HCT116 (cell line): ENCODE measurements at regions of chr6 and their contacts with region 1.

Region 1: DNA sequence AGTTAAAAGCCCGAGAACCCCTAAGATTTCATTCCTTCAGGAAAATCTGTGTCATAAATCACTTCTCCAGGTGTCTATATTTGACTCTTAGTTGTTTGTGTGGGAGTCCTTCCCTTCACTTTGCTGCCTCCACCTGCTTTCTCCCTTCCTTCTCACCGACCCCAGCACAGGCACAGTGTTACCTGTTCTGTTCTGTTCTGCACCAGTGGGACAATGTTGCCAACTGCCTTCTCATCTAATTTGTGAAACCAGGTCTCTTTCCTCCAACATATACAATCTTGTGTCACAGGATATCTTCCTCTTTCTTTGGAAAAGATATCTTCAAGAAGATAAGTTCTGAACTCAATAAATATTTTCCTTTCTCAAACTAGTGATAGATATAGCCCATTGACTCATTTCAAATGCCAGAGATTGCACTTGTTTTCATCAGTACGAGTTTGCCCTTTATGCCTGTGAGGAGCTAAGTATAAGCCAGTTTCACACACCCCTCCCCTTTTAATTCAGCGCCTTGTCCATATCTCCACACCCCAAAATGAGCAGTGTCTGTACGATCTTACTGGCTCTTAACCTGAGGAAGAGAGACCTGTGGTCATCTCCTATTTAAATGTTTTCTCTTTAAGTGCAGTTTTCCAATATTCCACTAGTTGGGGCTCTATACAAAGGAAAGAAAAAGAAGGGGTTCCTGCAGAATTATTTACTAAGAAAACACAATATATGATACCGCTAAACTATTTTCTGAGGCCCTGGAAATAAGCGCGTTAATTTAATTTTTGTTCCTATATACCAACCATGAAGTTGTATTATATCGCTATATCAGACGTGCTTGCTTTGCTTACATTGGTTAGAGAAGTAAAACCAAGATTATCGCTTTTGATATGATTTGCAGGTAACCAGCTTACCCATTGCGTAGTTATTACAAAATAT is 81.6 kb upstream of the PREP start:
- DNase-seq: peak; percentile 42
- ATAC-seq: peak; percentile 78
- H3K4me3 ChIP-seq: no peak overlapping the region
- H3K27ac ChIP-seq: no peak overlapping the region
- H3K4me1 ChIP-seq: no peaks in the 10 kb centered on the region
- H3K27me3 ChIP-seq: no peaks in the 10 kb centered on the region
- CTCF ChIP-seq: peak; percentile 70 to 93 (median 78)
- POLR2A ChIP-seq: no peak
- RAD21 ChIP-seq: peak; percentile 88

Region 2: GRCh38 chr6:105952772-105953690 is 468.5 kb after region 1 on chr6:
- CTCF ChIA-PET with region 1: no interaction called
- POLR2A ChIA-PET with region 1: no interaction called
- RAD21 ChIA-PET with region 1: no interaction called
- intact Hi-C with region 1: no loop called
- DNase-seq: no peak
- ATAC-seq: no peak
- H3K4me3 ChIP-seq: no peak overlapping the region
- H3K27ac ChIP-seq: no peak overlapping the region
- H3K4me1 ChIP-seq: no peaks in the 10 kb centered on the region
- H3K27me3 ChIP-seq: no peaks in the 10 kb centered on the region
- CTCF ChIP-seq: no peak
- POLR2A ChIP-seq: no peak
- RAD21 ChIP-seq: no peak

Region 3: GRCh38 chr6:106223300-106223930 is 738.9 kb after region 1 on chr6:
- CTCF ChIA-PET with region 1: interaction called, 4 read pairs
- POLR2A ChIA-PET with region 1: no interaction called
- RAD21 ChIA-PET with region 1: no interaction called
- intact Hi-C with region 1: loop called (anchors 2 kb)
- DNase-seq: peak; percentile 72
- ATAC-seq: peak; percentile 85
- H3K4me3 ChIP-seq: no peak overlapping the region
- H3K27ac ChIP-seq: no peak overlapping the region
- H3K4me1 ChIP-seq: no peaks in the 10 kb centered on the region
- H3K27me3 ChIP-seq: no peaks in the 10 kb centered on the region
- CTCF ChIP-seq: peak; percentile 60 to 80 (median 62)
- POLR2A ChIP-seq: no peak
- RAD21 ChIP-seq: peak; percentile 89

Region 4: DNA sequence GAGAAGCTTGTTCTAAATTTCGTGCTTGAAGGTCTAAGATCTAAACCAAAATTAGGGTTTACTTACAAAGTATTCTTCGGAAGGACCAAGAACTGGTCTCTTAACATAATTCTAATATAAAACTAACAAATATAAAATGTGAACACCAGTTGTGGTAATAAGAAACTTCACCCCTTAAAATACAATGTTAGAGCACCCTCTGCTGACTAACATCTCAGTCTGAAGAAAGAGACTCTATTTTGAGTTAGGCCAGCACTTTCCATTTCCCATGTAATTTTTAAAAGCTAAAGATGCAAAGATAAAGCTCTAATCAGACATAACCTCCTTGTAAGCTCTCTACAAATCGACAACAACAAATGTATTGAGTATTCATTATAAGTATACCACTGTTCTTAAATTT is 816.4 kb after region 1 on chr6:
- CTCF ChIA-PET with region 1: no interaction called
- POLR2A ChIA-PET with region 1: no interaction called
- RAD21 ChIA-PET with region 1: no interaction called
- intact Hi-C with region 1: loop called (anchors 2 kb)
- DNase-seq: no peak
- ATAC-seq: peak; percentile 53; the same call in 1 of the 2 replicates
- H3K4me3 ChIP-seq: no peak overlapping the region
- H3K27ac ChIP-seq: no peak overlapping the region
- H3K4me1 ChIP-seq: peaks cover 0 to 7% of the 10 kb centered on the region in 2 experiments; a peak in 1 of 4 replicates
- H3K27me3 ChIP-seq: no peaks in the 10 kb centered on the region
- CTCF ChIP-seq: peak; percentile 42 to 51 (median 46); a peak in 5 of 6 replicates
- POLR2A ChIP-seq: no peak
- RAD21 ChIP-seq: peak; percentile 68

Region 5: GRCh38 chr6:106568530-106568929 is 1084.0 kb after region 1 on chr6:
- CTCF ChIA-PET with region 1: no interaction called
- POLR2A ChIA-PET with region 1: no interaction called
- RAD21 ChIA-PET with region 1: no interaction called
- intact Hi-C with region 1: loop called (anchors 5 kb)
- DNase-seq: no peak
- ATAC-seq: no peak
- H3K4me3 ChIP-seq: no peak overlapping the region
- H3K27ac ChIP-seq: no peak overlapping the region
- H3K4me1 ChIP-seq: peaks cover 0 to 10% of the 10 kb centered on the region in 2 experiments; a peak in 2 of 4 replicates
- H3K27me3 ChIP-seq: no peaks in the 10 kb centered on the region
- CTCF ChIP-seq: no peak
- POLR2A ChIP-seq: no peak
- RAD21 ChIP-seq: no peak